Psoas muscle (tissue), 8 donors: ENCODE measurements at regions of chr15 and their contacts with region 1.

Region 1: GRCh38 chr15:64019764-64020163 is 26.5 kb downstream of the DAPK2 start:
- DNase-seq: peak; percentile 37 to 81
- ATAC-seq: peak; percentile 81 to 89 (median 86)
- H3K4me3 ChIP-seq: no peak overlapping the region
- H3K27ac ChIP-seq: peak overlapping the region; percentile 88
- H3K4me1 ChIP-seq: peaks cover 94% of the 10 kb centered on the region
- H3K27me3 ChIP-seq: no peaks in the 10 kb centered on the region
- CTCF ChIP-seq: no peak

Region 2: DNA sequence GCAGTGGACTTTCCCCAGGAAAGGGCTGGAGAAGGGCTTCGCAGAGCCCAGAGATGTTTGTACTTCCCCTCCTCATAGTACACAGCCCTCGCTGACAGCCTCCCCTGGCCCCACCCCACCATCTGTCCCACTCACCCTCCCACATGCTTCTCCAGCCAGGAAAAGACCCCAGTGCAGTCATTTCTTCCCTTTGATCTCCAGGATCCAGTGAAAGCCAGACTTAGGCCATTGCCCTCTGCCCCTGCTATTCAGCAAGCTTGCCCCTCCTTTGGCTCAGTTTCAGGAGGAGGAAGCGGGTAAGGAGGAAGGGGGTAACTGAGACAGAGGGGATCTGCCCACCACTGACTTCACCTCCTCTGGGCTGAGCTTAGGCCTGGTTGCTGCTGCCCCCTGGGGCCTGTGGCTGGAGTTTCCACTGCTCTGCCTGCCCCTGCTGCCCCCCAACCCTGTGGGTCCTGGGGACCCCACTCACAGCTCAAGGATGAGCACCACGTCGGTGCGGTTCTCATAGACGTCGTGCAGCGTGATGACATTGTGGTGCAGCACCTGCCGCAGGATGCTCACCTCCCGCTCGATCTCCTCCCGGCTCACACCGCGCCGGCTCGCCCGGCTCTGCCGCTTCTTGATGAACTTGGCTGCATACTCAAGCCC is 36.6 kb before region 1 on chr15:
- intact Hi-C with region 1: loop called in 1 of 2 experiments (anchors 5 kb)
- DNase-seq: no peak
- ATAC-seq: no peak
- H3K4me3 ChIP-seq: no peak overlapping the region
- H3K27ac ChIP-seq: peak overlapping the region; percentile 79
- H3K4me1 ChIP-seq: peaks cover 81% of the 10 kb centered on the region
- H3K27me3 ChIP-seq: no peaks in the 10 kb centered on the region
- CTCF ChIP-seq: peak; percentile 11